Posterior cingulate gyrus (tissue), 11 donors: ENCODE measurements at regions of chr7 and their contacts with region 1.

Region 1: GRCh38 chr7:70040970-70041766 is 442.9 kb downstream of the AUTS2 start:
- DNase-seq: no peak

Region 2: GRCh38 chr7:69588773-69589172 is 452.4 kb before region 1 on chr7:
- intact Hi-C with region 1: loop called (anchors 10 kb)
- DNase-seq: no peak

Region 3: DNA sequence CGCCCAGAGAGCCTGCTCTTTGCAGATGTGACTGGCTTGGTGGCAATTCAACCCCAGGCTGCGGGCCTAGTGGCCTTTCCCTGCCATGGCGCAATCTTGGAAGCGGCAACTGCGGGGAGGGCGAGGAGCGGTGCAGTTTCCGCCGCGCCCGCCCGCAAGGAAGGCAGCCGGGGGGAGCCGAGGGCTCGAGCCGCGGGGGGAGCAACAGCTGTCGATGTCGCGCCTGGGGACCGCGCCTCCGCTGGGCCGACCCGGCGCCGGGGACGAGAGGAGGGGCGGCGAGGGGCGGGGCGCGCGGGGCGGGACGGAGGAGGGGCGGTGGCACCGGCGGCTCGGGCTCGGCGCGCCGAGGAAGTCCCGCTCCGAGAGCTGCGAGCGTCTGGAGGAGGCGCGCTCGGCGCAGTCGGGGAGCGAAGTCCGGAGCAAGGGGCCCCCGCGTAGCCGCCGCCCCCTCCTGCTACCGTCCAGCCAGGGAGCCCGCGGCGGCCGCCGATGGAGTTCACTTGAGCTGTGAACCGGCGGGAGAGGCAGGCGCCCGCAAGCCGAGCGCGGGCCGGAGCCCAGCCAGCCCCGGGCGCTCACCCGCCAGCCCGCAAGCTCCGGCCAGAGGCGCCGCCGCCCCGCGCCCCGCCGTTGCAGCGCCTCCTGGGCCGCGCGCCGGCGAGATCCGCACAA is 652.7 kb after region 1 on chr7:
- intact Hi-C with region 1: loop called (anchors 1 kb)
- DNase-seq: peak; percentile 40 to 93 (median 59)